HEK293T (cell line): ENCODE measurements at regions of chr20 and their contacts with region 1.

Region 1: GRCh38 chr20:645318-646106 is 7.5 kb downstream of the SRXN1 start:
- DNase-seq: peak; percentile 84

Region 2: GRCh38 chr20:561437-562231 is 83.9 kb before region 1 on chr20:
- CTCF ChIA-PET with region 1: interaction called, 21 read pairs
- POLR2A ChIA-PET with region 1: no interaction called
- DNase-seq: peak; percentile 78